Activated naive CD4-positive, alpha-beta T cell treated with anti-CD3 and anti-CD28 coated beads for 36 hours (primary cell): ENCODE measurements at regions of chr5 and their contacts with region 1.

Region 1: DNA sequence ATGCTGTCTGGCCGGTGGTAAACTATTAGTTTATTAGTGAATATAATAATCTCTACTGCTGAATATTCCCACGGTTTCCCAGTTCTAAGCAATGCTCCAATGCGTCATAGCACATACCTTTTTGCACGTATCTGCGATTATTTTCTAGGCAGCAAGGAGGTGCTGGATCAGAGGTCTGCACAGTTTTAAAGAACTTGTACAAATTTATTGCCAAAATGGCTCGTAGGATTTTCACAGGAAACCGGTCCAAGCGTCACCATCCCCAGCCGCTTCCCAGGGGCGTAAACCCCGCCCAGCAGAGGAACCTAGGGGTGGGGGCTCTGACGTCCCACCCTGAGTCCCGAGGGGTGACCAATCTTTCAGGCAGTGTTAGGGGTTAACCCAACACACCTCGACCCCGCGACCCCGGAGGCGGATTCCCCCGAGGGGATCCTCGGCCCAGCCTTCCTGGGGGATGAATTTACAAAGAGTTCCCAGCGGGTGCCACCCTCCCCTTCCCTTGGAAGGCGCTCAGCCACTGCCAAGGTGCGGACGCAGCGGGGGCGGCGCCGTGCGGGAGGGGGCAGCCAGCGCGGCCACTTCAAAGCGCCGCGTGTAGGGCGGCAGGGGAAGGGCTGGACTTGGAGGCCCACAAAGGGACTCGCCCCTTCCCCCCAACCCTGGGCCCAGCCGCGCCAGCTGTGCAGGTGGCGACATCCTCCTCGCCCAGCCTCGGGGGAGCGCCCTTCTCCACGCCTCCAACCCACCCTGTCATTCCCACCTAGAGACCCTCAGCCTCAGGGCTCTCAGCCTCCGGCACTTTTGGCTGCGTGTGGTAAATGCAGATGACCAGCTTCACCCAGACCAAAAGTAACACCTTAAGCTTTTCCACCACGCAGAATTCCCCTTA is 43.5 kb upstream of the TCF7 start:
- DNase-seq: peak; percentile 85
- H3K4me3 Mint-ChIP-seq: peak overlapping the region; percentile 79
- H3K27ac Mint-ChIP-seq: peak overlapping the region; percentile 97
- H3K4me1 Mint-ChIP-seq: peaks cover 70% of the 10 kb centered on the region
- H3K27me3 Mint-ChIP-seq: no peaks in the 10 kb centered on the region

Region 2: DNA sequence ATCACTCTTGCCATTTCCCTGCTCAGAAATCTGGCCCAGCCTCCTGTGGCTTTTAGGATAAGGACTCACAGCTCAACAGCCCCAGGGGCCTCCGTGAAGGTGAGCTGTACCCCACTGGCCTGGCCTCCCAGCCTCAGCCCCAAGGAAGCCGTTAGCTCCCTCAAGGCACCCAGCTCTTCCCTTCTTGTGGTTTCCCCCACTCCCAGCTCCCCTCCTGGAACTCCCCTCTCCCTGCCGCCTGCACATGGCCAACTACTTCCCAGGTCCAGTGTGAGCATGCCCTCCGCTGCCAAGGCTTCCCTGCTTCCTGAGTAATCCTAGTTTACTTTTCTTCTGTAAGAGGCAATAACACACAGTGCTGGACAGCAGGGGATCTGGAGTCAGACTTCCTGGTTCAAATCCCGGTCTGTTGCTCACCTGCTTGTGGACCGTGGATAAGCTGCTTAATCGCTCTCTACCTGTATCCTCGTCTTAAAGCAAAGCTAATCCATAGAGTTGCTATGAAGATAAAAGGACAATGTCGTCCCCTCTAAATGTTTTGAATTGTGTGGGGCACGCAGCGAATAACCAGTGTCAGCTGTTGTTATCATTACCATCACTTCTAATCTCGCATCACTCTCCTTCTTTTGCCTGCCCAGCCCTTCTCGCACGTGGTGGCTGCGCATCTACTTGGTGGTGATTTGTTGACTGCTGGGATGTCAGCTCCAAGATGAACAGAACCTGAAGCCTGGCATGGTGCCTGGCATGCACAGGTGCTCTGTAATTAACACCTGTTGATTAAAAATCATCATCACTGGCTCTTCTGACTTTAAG is 189.2 kb before region 1 on chr5:
- CTCF ChIA-PET with region 1: no interaction called
- intact Hi-C with region 1: no loop called
- DNase-seq: no peak
- H3K4me3 Mint-ChIP-seq: no peak overlapping the region
- H3K27ac Mint-ChIP-seq: no peak overlapping the region
- H3K4me1 Mint-ChIP-seq: peaks cover 14% of the 10 kb centered on the region
- H3K27me3 Mint-ChIP-seq: peaks cover 2% of the 10 kb centered on the region

Region 3: DNA sequence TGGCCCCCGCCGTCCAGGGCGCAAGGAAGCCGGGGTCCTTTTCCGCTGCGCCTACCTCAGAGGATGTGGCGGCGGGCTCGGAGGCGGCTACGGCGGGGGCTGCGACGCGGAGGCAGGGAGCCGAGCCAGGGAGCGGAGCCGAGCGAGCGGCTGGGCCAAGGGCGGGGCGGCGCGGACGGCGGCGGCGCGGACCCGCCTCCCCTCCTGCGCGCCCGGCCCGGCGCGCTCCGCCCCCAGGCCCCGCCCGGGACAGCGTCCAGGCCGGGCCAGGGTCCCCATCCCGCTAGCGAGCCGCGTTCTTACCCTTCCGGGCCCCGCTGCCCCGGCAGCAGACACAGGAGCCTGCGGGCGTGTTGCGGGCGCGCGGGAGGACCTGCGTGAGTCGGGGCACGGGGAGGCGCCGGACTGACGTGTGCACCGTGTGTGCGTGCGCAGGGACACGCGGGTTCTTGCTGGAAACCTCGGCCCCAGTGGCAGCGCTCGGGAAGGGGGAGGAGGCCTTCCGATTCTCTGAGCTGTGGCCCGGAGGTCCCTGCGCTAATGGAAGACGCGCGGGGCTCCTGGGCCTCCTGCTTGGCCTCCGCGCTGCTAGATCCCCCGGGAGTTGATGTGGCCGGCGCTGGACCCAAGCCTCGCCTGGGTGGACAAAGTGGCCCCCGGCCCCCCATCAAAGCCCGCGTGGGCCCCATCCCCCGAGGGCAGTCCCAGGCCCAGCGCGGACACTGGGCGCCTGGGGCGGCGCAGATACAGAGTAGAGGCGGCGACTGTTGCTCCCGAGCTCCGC is 66.2 kb before region 1 on chr5 and contains the start of gene VDAC1:
- CTCF ChIA-PET with region 1: no interaction called
- intact Hi-C with region 1: loop called (anchors 1 kb)
- DNase-seq: peak; percentile 79
- H3K4me3 Mint-ChIP-seq: peak within 1 kb of the TSS; percentile 89
- H3K27ac Mint-ChIP-seq: peak within 1 kb of the TSS; percentile 95
- H3K4me1 Mint-ChIP-seq: peaks cover 42% of the 10 kb centered on the region
- H3K27me3 Mint-ChIP-seq: no peaks in the 10 kb centered on the region
- total RNA-seq, gene VDAC1: 485 to 513 TPM

Region 4: DNA sequence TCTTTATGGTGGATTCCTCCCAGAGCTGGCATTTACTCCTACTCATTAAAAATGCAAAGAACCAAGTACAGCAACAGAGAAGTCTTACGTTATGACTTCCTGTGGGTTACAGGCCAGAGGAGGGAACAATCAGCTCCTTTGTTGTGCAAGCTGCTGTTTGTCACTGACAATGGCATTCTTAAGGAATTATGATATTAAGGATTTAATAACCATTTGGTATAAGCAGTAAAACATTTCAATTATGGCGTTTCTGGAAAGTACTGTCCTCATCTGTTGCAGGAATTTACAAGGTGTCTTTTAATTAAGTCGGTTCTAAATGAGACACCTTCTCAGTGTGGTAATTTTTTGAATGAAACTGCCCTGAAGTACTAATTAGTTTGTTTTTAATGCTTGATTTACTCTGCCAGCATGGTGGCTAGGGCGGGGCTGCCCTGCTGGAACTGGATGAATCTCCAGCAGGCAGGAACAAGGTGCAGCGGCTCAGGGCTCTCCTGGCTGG is 17.1 kb before region 1 on chr5:
- CTCF ChIA-PET with region 1: interaction called, 3 read pairs
- intact Hi-C with region 1: loop called (anchors 1 kb)
- DNase-seq: no peak
- H3K4me3 Mint-ChIP-seq: no peak overlapping the region
- H3K27ac Mint-ChIP-seq: peak overlapping the region; percentile 65
- H3K4me1 Mint-ChIP-seq: peaks cover 52% of the 10 kb centered on the region
- H3K27me3 Mint-ChIP-seq: no peaks in the 10 kb centered on the region

Region 5: DNA sequence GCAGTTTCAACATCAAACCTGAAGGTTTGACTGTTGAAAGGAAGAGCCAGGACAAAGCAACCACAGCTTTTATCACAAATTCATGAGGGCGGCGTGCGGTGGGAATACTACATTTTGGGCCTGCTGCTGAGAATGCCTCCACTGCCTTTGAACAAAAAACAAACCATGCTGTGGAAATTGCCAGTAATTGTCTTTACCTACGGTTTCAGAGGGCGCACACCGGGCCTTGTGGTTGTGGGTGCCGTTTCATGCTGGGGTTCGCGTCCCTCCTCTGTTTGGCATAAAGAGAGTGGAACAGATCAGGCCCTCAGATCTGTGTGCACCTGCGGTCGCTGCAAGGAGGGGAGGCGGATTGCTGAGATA is 16.0 kb after region 1 on chr5:
- CTCF ChIA-PET with region 1: interaction called, 17 read pairs
- intact Hi-C with region 1: loop called (anchors 1 kb)
- DNase-seq: peak; percentile 85
- H3K4me3 Mint-ChIP-seq: peak overlapping the region; percentile 59
- H3K27ac Mint-ChIP-seq: peak overlapping the region; percentile 86
- H3K4me1 Mint-ChIP-seq: peaks cover 82% of the 10 kb centered on the region
- H3K27me3 Mint-ChIP-seq: no peaks in the 10 kb centered on the region

Region 6: GRCh38 chr5:134092878-134093277 is 21.9 kb after region 1 on chr5:
- CTCF ChIA-PET with region 1: interaction called, 4 read pairs
- intact Hi-C with region 1: loop called (anchors 1 kb)
- DNase-seq: peak; percentile 64
- H3K4me3 Mint-ChIP-seq: no peak overlapping the region
- H3K27ac Mint-ChIP-seq: peak overlapping the region; percentile 74
- H3K4me1 Mint-ChIP-seq: peaks cover 89% of the 10 kb centered on the region
- H3K27me3 Mint-ChIP-seq: no peaks in the 10 kb centered on the region

Region 7: DNA sequence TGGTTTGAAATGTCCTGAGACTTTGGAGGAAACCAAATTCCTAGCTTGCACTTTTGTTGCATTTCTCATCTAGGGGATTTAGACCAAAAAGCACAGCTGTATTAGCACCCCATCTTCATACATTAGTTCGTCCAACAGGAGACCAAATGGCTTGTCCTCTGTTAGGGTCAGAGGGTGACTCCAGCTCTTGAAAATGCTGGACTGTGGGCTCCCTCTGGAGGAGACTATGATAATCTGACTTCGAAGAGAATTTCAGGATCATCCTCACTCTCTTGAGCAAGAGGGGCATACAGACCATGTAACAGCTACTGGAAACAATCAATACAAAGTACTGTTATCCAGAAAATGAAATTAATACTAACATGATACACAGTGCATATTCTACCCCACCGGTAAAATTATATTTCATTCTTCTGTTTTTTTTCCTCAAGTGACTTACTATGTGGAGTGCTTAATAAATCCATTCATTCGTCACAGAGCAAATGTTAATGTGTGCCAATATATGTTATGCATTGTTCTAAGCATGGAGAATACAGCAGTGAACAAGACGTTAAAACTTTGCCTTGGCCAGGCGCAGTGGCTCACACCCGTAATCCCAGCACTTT is 218.6 kb after region 1 on chr5:
- CTCF ChIA-PET with region 1: no interaction called
- intact Hi-C with region 1: no loop called
- DNase-seq: peak; percentile 56
- H3K4me3 Mint-ChIP-seq: no peak overlapping the region
- H3K27ac Mint-ChIP-seq: no peak overlapping the region
- H3K4me1 Mint-ChIP-seq: peaks cover 4% of the 10 kb centered on the region
- H3K27me3 Mint-ChIP-seq: no peaks in the 10 kb centered on the region